ENCODE measurements at regions of chr10 and their contacts with region 1.

Region 1: GRCh38 chr10:98349508-98349922 is 65.5 kb downstream of the PYROXD2 start:
- DNase-seq: peak; percentile 100
- H3K4me3 ChIP-seq: no peak overlapping the region; the same call in 1 of the 2 replicates
- CTCF ChIP-seq: no peak

Region 2: GRCh38 chr10:98323221-98324164 is 26.0 kb before region 1 on chr10:
- CTCF ChIA-PET with region 1: interaction called, 3 read pairs
- POLR2A ChIA-PET with region 1: interaction called, 16 read pairs
- DNase-seq: peak; percentile 85
- H3K4me3 ChIP-seq: no peak overlapping the region
- CTCF ChIP-seq: no peak

Region 3: DNA sequence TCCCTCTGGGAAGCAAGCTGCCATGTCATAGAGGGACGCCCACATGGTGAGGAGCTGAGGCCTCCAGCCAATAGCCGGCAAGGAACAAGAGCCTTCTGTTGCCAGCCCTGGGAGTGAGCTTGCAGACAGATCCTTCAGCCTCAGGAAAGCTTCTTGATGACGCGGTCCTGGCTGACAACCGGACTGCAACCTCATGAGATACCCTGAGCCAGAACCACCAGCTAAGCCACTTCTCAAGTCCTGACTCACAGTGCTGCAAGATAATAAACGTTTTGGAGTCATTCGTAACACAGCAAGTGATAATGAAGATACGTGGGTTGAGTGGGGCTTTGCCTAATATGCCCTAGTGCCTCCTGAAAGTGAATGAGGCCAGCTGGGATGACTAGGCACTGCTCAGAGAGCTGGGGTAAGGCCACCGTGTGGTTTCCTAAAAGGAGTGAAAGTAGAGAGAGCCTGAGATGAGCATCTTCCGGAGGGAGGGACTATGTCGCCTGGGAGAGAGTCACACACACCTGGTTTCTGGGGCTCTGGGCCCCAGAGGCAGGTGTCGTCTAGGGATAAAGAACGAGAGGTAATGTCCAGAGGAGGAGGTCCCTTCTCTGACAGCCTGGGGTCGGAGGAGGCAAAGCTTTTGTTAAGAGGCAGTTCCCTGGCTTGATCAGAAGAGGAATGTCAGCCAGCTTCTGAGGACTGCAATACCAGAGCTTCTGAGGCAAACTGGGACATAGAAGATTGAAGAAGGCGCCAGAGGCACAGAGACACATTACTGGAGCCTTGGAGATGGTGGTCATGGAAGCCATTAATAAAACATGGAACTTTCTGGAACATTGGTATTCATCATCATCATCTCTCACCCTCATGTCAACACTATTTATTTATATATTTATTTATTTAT is 11.9 kb after region 1 on chr10:
- CTCF ChIA-PET with region 1: interaction called, 4 read pairs
- POLR2A ChIA-PET with region 1: interaction called, 26 read pairs
- DNase-seq: peak; percentile 100
- H3K4me3 ChIP-seq: peak overlapping the region; percentile 38
- CTCF ChIP-seq: no peak

Measured in AG04449 (cell line).